CD4-positive, alpha-beta T cell (primary cell): ENCODE measurements at regions of chr13 and their contacts with region 1.

Region 1: DNA sequence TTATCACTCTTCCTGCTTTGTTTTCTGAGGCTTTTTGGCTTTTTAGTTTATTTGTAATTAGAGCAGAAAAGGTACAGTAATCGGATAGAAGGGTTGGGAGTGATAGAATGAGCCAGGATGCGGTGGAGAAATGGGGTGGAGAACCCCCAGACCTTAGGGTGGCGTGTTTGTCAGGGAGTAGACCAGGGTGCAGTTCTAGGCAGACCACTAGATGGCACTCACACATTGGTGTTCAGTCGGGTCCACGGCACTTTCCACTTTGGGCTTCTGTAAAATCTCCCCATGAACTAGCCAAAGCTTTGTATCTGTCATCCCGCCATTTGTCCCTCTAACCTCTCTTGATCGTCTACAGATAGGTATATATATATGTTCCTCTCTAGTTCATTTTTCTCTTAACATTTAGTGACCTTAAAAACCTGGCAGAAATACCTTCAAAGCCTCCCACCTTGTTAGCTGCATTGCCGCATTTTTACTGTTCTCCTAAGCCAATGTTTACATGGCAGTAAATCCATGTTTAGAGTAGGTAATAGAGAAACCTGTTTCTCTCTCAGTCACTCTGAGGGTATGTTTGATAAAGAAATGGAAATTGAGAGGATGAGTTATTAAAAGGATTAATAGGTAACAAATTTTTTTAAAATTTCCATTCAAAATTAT is 154.9 kb downstream of the TM9SF2 start:
- DNase-seq: peak; percentile 74 to 93 (median 82)
- ATAC-seq: peak; percentile 61
- H3K4me3 ChIP-seq: peak overlapping the region; percentile 37
- H3K4me3 Mint-ChIP-seq: peak overlapping the region; percentile 76
- H3K27ac ChIP-seq: peak overlapping the region; percentile 19 to 29
- H3K27ac Mint-ChIP-seq: peak overlapping the region; percentile 97
- H3K4me1 ChIP-seq: peaks cover 37% of the 10 kb centered on the region
- H3K4me1 Mint-ChIP-seq: peaks cover 48% of the 10 kb centered on the region
- H3K27me3 ChIP-seq: no peaks in the 10 kb centered on the region
- H3K27me3 Mint-ChIP-seq: no peaks in the 10 kb centered on the region
- CTCF ChIP-seq: peak; percentile 93

Region 2: GRCh38 chr13:99626461-99627082 is 29.6 kb before region 1 on chr13:
- CTCF ChIA-PET with region 1: no interaction called
- POLR2A ChIA-PET with region 1: no interaction called
- intact Hi-C with region 1: no loop called
- DNase-seq: no peak
- ATAC-seq: no peak
- H3K4me3 ChIP-seq: no peak overlapping the region
- H3K4me3 Mint-ChIP-seq: no peak overlapping the region
- H3K27ac ChIP-seq: no peak overlapping the region
- H3K27ac Mint-ChIP-seq: no peak overlapping the region
- H3K4me1 ChIP-seq: no peaks in the 10 kb centered on the region
- H3K4me1 Mint-ChIP-seq: peaks cover 52% of the 10 kb centered on the region
- H3K27me3 ChIP-seq: no peaks in the 10 kb centered on the region
- H3K27me3 Mint-ChIP-seq: no peaks in the 10 kb centered on the region
- CTCF ChIP-seq: no peak

Region 3: DNA sequence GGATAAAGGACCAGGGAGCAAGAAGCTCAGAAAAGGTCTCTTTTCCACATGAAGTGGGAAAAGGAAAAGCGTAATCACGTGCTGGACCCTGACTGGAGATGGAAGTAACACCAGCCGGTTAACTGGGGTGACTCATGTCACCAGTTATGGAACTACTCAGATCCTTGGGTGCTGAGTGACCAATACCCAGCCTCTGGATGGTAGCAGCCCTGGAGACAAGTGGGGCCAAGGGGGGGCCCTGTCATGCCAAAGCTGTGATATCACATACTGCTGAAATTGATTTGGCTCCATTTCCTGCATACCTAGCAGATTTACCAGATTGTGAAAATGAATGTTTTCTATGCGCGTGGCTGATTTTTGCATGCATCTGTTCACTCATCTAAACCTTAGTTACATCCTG is 156.4 kb after region 1 on chr13:
- CTCF ChIA-PET with region 1: no interaction called
- POLR2A ChIA-PET with region 1: interaction called, 40 read pairs
- intact Hi-C with region 1: no loop called
- DNase-seq: no peak
- ATAC-seq: no peak
- H3K4me3 ChIP-seq: no peak overlapping the region
- H3K4me3 Mint-ChIP-seq: no peak overlapping the region
- H3K27ac ChIP-seq: no peak overlapping the region
- H3K27ac Mint-ChIP-seq: no peak overlapping the region
- H3K4me1 ChIP-seq: peaks cover 8% of the 10 kb centered on the region
- H3K4me1 Mint-ChIP-seq: peaks cover 11% of the 10 kb centered on the region
- H3K27me3 ChIP-seq: no peaks in the 10 kb centered on the region
- H3K27me3 Mint-ChIP-seq: no peaks in the 10 kb centered on the region
- CTCF ChIP-seq: no peak

Region 4: GRCh38 chr13:99955747-99956472 is 299.7 kb after region 1 on chr13:
- CTCF ChIA-PET with region 1: no interaction called
- POLR2A ChIA-PET with region 1: interaction called, 4 read pairs
- intact Hi-C with region 1: loop called in 1 of 2 experiments (anchors 5 kb)
- DNase-seq: peak in 2 of 14 experiments; percentile 25
- ATAC-seq: no peak
- H3K4me3 ChIP-seq: peak overlapping the region; percentile 22
- H3K4me3 Mint-ChIP-seq: peak overlapping the region; percentile 67
- H3K27ac ChIP-seq: no peak overlapping the region
- H3K27ac Mint-ChIP-seq: no peak overlapping the region
- H3K4me1 ChIP-seq: peaks cover 46% of the 10 kb centered on the region
- H3K4me1 Mint-ChIP-seq: peaks cover 37% of the 10 kb centered on the region
- H3K27me3 ChIP-seq: peaks cover 74 to 78% of the 10 kb centered on the region in 2 experiments
- H3K27me3 Mint-ChIP-seq: peaks cover 96% of the 10 kb centered on the region
- CTCF ChIP-seq: no peak

Region 5: DNA sequence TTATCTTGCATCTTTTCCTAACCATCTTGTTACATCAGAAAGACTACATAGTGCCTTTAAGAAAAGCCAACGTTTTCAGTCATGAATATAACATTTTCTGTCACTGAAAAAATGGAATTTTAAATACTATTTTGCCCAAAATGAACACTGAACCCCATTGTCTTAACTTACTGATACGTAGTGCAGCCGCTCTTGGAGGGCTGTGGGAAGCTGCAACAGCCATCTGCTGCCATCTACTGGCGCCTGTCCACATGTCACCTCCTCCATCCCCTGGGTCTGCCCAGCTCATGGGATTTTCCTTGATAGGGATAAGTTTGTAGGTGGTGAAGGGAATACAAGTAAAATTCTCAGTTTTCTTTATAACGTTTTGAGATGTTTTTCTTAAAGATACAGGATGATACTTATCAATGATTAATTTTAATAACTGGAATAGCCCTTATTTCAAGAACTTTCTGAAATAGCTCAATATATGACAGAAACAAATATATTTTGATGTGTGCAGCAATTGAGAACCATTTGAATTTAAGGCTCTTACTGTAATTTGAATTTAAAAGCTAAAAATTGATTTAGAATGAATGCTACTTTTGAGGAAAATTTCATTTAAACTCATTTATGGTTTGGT is 858.7 kb after region 1 on chr13:
- CTCF ChIA-PET with region 1: interaction called, 28 read pairs
- POLR2A ChIA-PET with region 1: interaction called, 6 read pairs
- intact Hi-C with region 1: loop called (anchors 1 kb)
- DNase-seq: peak; percentile 57 to 85 (median 66)
- ATAC-seq: peak; percentile 95
- H3K4me3 ChIP-seq: no peak overlapping the region
- H3K4me3 Mint-ChIP-seq: no peak overlapping the region
- H3K27ac ChIP-seq: no peak overlapping the region
- H3K27ac Mint-ChIP-seq: no peak overlapping the region
- H3K4me1 ChIP-seq: peaks cover 12% of the 10 kb centered on the region
- H3K4me1 Mint-ChIP-seq: peaks cover 19% of the 10 kb centered on the region
- H3K27me3 ChIP-seq: no peaks in the 10 kb centered on the region
- H3K27me3 Mint-ChIP-seq: no peaks in the 10 kb centered on the region
- CTCF ChIP-seq: peak; percentile 100

Region 6: DNA sequence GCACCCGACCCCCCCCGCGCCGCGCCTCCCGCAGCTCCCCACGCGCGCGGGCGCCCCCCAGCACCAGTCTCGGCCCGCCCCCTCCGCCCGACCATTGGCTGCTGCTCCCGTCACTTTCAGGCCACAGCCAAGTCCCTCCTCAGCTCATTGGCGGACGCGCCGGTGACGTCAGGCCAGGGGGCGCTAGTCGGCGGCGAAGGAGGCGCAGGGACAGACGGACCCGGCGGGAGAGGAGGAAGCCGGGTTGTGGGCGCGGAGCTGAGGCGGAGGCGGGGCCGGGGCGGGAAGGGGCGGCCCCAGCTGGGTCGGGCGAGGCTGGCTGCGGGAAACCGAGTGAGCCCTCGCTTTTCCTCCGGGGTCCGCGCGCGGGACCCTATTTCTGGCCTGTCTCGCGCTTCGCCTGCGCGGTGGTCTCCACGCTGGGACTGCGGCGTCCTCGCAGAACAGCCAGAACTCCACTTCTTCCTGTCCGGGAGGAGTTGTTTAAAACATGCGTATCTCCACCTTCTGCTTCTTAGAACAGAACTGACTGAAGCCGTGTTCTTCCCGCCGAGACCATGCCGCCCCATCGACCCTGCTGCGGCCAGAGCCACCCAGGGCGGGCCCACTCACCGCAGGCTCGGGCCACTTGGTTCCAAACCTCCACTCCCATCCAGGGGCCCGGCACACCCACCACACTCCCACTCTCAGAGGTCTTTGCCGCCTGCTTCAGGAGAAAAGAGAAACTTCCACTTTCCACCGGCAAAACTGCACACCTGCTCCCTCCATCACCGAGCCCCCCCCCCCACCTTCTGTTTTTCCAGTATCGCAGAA is 1018.8 kb after region 1 on chr13:
- CTCF ChIA-PET with region 1: interaction called, 3 read pairs
- POLR2A ChIA-PET with region 1: interaction called, 19 read pairs
- intact Hi-C with region 1: loop called in 1 of 2 experiments (anchors 2 kb)
- DNase-seq: peak; percentile 98 to 100 (median 100)
- ATAC-seq: peak; percentile 90
- H3K4me3 ChIP-seq: peak overlapping the region; percentile 94
- H3K4me3 Mint-ChIP-seq: peak overlapping the region; percentile 96
- H3K27ac ChIP-seq: peak overlapping the region; percentile 48 to 50
- H3K27ac Mint-ChIP-seq: peak overlapping the region; percentile 82
- H3K4me1 ChIP-seq: peaks cover 22% of the 10 kb centered on the region
- H3K4me1 Mint-ChIP-seq: peaks cover 36% of the 10 kb centered on the region
- H3K27me3 ChIP-seq: no peaks in the 10 kb centered on the region
- H3K27me3 Mint-ChIP-seq: no peaks in the 10 kb centered on the region
- CTCF ChIP-seq: peak; percentile 27